ENCODE measurements at regions of chr5 and their contacts with region 1.

Region 1: GRCh38 chr5:43484106-43484849 is 613 bp upstream of the TMEM267 start:
- DNase-seq: peak; percentile 82
- ATAC-seq: peak; percentile 75
- H3K4me3 ChIP-seq: peak overlapping the region; percentile 62
- H3K27ac ChIP-seq: peak overlapping the region; percentile 86
- H3K4me1 ChIP-seq: peaks cover 2% of the 10 kb centered on the region; the same call in 1 of the 2 replicates
- H3K27me3 ChIP-seq: no peaks in the 10 kb centered on the region
- CTCF ChIP-seq: peak; percentile 71
- POLR2A ChIP-seq: no peak; the same call in 1 of the 2 replicates
- RAD21 ChIP-seq: peak; percentile 58

Region 2: DNA sequence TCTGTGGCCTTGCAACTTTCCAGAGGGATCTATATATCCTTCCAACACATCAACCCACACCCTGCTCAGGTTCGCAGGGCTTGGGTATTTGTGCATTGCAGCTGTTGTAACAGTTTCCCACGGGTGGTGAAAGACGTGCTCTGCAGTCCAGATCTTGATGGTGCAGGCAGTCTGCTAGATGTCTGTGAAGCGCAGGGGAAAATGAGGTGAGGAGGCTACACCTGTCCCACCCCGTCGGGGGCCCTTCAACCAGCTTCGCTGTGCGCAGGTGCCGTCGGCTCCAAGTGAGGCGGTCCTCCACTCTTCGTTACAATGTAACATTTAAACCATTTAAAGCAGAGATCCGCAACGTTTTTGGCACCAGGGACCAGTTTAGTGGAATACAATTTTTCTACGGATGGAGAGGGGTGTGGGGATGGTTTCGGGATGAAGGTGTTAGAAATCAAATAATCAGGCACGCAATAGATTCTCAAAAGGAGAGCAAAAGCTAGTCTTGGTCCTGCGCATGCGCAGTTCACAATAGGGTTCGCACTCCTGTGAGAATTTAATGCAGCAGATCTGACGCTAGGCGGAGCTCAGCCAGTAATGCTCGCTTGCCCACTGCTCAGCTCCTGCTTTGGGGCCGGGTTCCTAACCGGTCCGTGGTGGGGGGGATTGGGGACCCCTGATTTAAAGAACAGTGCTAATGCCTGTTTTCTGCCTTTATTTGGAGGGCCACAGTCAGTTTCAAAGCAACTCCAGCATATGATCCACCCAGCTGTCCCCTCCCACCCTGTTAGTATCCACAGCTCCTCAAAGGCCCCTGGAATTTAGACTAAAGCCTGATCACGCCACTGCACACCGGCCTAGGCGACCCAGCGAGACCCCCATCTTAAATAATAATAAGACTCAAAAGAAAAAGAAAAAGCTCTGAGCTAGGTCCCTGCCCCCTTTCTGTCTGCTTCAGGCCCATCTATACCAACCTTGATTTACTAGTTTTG is 575.5 kb before region 1 on chr5:
- CTCF ChIA-PET with region 1: no interaction called
- POLR2A ChIA-PET with region 1: no interaction called
- dilution Hi-C with region 1: no loop called
- in situ Hi-C with region 1: loop called (anchors 25 kb)
- intact Hi-C with region 1: no loop called
- DNase-seq: peak; percentile 85
- ATAC-seq: peak; percentile 96
- H3K4me3 ChIP-seq: peak overlapping the region; percentile 50
- H3K27ac ChIP-seq: no peak overlapping the region
- H3K4me1 ChIP-seq: no peaks in the 10 kb centered on the region
- H3K27me3 ChIP-seq: peaks cover 13% of the 10 kb centered on the region
- CTCF ChIP-seq: peak; percentile 83
- POLR2A ChIP-seq: no peak
- RAD21 ChIP-seq: peak; percentile 78

Region 3: DNA sequence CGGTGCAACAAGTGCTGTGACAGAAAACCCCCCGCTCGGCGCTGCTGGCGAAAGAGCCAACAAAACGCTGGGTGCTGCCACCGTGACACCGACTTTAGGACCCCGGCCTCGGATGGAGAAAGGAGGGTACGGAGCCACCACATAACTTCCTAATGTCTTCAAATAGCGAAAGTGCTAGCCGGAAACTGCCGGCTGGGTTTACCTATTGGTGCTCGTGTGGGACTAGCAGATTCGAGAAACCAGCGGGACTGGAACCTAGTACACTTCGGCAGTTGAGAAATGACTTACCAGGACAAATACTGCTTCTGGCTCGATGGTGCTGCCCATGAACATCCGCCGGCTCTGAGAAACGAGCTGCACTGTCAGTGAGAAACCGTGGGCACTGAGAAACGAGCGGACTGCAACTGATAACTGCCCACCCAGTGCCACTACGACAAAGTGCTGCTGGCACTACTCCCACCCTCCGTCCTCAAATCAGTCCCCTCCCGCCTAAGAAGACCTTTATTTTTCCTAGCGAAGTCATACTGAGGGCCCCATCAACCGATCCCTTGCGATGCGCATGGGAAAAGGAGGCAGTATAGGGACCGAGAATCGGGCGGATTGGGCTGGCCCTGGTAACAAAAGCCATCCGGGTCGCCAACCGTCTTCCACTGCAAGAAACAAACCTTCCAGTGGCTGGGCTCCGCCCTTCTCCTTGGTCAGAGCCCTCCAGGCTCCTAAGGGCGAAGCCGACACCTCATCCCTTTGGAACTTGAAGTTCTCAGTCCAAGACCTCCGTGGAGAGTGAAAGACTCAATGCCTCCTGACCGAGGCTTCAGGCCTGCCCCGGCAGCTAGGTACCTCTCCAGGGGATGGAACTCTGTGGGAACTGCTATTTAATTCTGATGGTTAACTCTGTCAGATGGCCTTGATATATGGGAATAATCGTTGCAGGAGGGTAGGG is 417.2 kb before region 1 on chr5:
- CTCF ChIA-PET with region 1: no interaction called
- POLR2A ChIA-PET with region 1: no interaction called
- dilution Hi-C with region 1: no loop called
- in situ Hi-C with region 1: no loop called
- intact Hi-C with region 1: loop called (anchors 5 kb)
- DNase-seq: peak; percentile 91
- ATAC-seq: peak; percentile 56
- H3K4me3 ChIP-seq: peak overlapping the region; percentile 69
- H3K27ac ChIP-seq: peak overlapping the region; percentile 88
- H3K4me1 ChIP-seq: peaks cover 4% of the 10 kb centered on the region
- H3K27me3 ChIP-seq: no peaks in the 10 kb centered on the region
- CTCF ChIP-seq: no peak
- POLR2A ChIP-seq: peak; percentile 89
- RAD21 ChIP-seq: no peak

Region 4: GRCh38 chr5:43313035-43313853 is 171.0 kb before region 1 on chr5 and contains the start of gene HMGCS1:
- CTCF ChIA-PET with region 1: no interaction called
- POLR2A ChIA-PET with region 1: no interaction called
- dilution Hi-C with region 1: no loop called
- in situ Hi-C with region 1: no loop called
- intact Hi-C with region 1: loop called (anchors 5 kb)
- DNase-seq: peak; percentile 100
- ATAC-seq: peak; percentile 97
- H3K4me3 ChIP-seq: peak within 1 kb of the TSS; percentile 69
- H3K27ac ChIP-seq: peak within 1 kb of the TSS; percentile 72
- H3K4me1 ChIP-seq: peaks cover 2% of the 10 kb centered on the region; the same call in 1 of the 2 replicates
- H3K27me3 ChIP-seq: no peaks in the 10 kb centered on the region
- CTCF ChIP-seq: 0 out of 2 replicates have a peak, but pooled peaks have one; percentile 2
- POLR2A ChIP-seq: peak; percentile 97
- RAD21 ChIP-seq: no peak
- total RNA-seq, gene HMGCS1: 30.6 and 32.8 TPM in 2 replicates

Region 5: DNA sequence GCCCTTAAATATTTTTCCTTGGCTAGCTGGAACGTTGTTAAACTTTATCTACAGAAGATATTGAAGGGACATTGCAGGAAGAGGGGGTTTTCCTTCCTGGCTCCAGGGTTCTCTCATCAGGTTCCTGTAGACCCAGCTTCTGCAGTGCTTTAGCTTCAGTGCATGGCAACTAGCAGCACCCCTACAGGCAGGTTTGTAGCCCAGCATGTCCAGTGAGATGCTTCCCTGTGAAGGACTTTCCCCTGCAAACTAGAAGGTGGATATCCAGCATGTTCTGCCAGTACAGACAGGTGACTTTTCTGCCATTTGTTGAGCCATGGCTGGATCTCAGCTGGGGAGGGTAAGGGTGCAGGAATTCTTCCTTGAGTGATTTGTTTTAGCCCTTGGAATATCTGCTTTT is 82.5 kb before region 1 on chr5:
- CTCF ChIA-PET with region 1: interaction called, 9 read pairs
- POLR2A ChIA-PET with region 1: no interaction called
- dilution Hi-C with region 1: no loop called
- in situ Hi-C with region 1: no loop called
- intact Hi-C with region 1: loop called (anchors 1 kb)
- DNase-seq: peak; percentile 13
- ATAC-seq: peak; percentile 56; the same call in 1 of the 2 replicates
- H3K4me3 ChIP-seq: no peak overlapping the region
- H3K27ac ChIP-seq: no peak overlapping the region
- H3K4me1 ChIP-seq: no peaks in the 10 kb centered on the region
- H3K27me3 ChIP-seq: peaks cover 8% of the 10 kb centered on the region
- CTCF ChIP-seq: 0 out of 2 replicates have a peak, but pooled peaks have one; percentile 17
- POLR2A ChIP-seq: no peak
- RAD21 ChIP-seq: no peak

Region 6: DNA sequence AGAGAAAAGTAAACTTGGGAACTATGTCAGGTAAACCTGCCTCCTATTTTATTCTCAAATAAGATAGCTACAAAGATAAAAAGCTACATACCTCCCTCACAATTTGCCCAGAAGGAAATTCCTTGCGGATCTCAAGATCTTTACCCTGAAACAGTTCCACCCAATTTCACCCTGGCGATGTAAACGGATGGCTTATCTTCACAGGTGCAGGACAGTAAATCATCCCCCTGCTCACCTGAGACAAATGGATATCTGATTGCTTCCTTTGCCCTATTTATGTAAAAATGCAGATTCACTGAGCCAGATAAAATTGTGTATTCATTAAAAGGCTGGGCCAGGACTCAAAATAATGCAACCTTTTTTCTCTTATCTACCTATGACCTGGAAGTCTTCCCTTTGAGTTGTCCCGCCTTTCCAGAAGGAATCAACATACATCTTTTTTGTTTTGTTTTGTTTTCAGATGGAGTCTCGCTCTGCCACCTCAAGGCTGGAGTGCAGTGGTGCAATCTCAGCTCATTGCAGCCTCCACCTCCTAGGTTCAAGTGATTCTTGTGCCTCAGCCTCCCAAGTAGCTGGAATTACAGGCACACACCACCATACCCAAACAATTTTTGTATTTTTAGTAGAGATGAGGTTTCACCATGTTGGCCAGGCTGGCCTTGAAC is 14.4 kb before region 1 on chr5:
- CTCF ChIA-PET with region 1: no interaction called
- POLR2A ChIA-PET with region 1: interaction called, 12 read pairs
- dilution Hi-C with region 1: no loop called
- in situ Hi-C with region 1: no loop called
- intact Hi-C with region 1: no loop called
- DNase-seq: no peak
- ATAC-seq: no peak
- H3K4me3 ChIP-seq: no peak overlapping the region
- H3K27ac ChIP-seq: no peak overlapping the region
- H3K4me1 ChIP-seq: no peaks in the 10 kb centered on the region
- H3K27me3 ChIP-seq: no peaks in the 10 kb centered on the region
- CTCF ChIP-seq: no peak
- POLR2A ChIP-seq: no peak
- RAD21 ChIP-seq: no peak

Region 7: GRCh38 chr5:43514816-43515677 is 30.8 kb after region 1 on chr5 and contains the start of gene C5orf34:
- CTCF ChIA-PET with region 1: no interaction called
- POLR2A ChIA-PET with region 1: no interaction called
- dilution Hi-C with region 1: no loop called
- in situ Hi-C with region 1: no loop called
- intact Hi-C with region 1: loop called (anchors 2 kb)
- DNase-seq: peak; percentile 94
- ATAC-seq: peak; percentile 97
- H3K4me3 ChIP-seq: peak within 1 kb of the TSS; percentile 67
- H3K27ac ChIP-seq: peak within 1 kb of the TSS; percentile 78
- H3K4me1 ChIP-seq: no peaks in the 10 kb centered on the region
- H3K27me3 ChIP-seq: no peaks in the 10 kb centered on the region
- CTCF ChIP-seq: no peak
- POLR2A ChIP-seq: peak; percentile 86
- RAD21 ChIP-seq: no peak
- total RNA-seq, gene C5orf34: 6.1 and 7.2 TPM in 2 replicates

Region 8: DNA sequence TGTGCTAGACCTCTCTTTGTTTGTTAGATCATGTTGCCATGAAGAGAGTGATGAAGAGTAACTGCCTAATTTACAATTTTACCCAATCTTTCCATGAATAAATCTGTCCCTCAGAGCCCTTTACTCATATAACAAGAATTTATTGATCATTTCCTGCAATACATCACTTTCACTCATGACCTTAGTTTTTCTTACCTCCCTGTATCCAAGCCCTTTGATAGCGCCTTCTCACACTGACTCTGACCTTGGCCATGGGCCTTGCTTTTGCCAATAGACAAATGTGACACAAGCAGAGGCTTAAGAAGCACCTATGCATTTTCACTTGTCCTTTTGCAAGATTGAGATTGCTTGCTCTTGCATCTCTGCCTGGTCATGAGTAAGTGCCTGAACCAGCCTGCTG is 406.8 kb after region 1 on chr5:
- CTCF ChIA-PET with region 1: no interaction called
- POLR2A ChIA-PET with region 1: no interaction called
- dilution Hi-C with region 1: no loop called
- in situ Hi-C with region 1: no loop called
- intact Hi-C with region 1: no loop called
- DNase-seq: no peak
- ATAC-seq: no peak
- H3K4me3 ChIP-seq: no peak overlapping the region
- H3K27ac ChIP-seq: no peak overlapping the region
- H3K4me1 ChIP-seq: no peaks in the 10 kb centered on the region; the same call in 1 of the 2 replicates
- H3K27me3 ChIP-seq: no peaks in the 10 kb centered on the region
- CTCF ChIP-seq: no peak
- POLR2A ChIP-seq: no peak
- RAD21 ChIP-seq: no peak

Measured in IMR-90 (cell line).